CD4-positive, alpha-beta T cell (primary cell): ENCODE measurements at regions of chr14 and their contacts with region 1.

Region 1: GRCh38 chr14:53152890-53153701 is at the start of gene DDHD1:
- DNase-seq: peak; percentile 69 to 96 (median 82)
- ATAC-seq: peak; percentile 82
- H3K4me3 ChIP-seq: peak within 1 kb of the TSS; percentile 98
- H3K4me3 Mint-ChIP-seq: peak within 1 kb of the TSS; percentile 99
- H3K27ac ChIP-seq: peak within 1 kb of the TSS; percentile 87 to 94
- H3K27ac Mint-ChIP-seq: peak within 1 kb of the TSS; percentile 97
- H3K4me1 ChIP-seq: peaks cover 26% of the 10 kb centered on the region
- H3K4me1 Mint-ChIP-seq: peaks cover 56% of the 10 kb centered on the region
- H3K27me3 ChIP-seq: no peaks in the 10 kb centered on the region
- H3K27me3 Mint-ChIP-seq: no peaks in the 10 kb centered on the region
- CTCF ChIP-seq: no peak
- total RNA-seq, gene DDHD1: 42.5 to 44.5 TPM

Region 2: DNA sequence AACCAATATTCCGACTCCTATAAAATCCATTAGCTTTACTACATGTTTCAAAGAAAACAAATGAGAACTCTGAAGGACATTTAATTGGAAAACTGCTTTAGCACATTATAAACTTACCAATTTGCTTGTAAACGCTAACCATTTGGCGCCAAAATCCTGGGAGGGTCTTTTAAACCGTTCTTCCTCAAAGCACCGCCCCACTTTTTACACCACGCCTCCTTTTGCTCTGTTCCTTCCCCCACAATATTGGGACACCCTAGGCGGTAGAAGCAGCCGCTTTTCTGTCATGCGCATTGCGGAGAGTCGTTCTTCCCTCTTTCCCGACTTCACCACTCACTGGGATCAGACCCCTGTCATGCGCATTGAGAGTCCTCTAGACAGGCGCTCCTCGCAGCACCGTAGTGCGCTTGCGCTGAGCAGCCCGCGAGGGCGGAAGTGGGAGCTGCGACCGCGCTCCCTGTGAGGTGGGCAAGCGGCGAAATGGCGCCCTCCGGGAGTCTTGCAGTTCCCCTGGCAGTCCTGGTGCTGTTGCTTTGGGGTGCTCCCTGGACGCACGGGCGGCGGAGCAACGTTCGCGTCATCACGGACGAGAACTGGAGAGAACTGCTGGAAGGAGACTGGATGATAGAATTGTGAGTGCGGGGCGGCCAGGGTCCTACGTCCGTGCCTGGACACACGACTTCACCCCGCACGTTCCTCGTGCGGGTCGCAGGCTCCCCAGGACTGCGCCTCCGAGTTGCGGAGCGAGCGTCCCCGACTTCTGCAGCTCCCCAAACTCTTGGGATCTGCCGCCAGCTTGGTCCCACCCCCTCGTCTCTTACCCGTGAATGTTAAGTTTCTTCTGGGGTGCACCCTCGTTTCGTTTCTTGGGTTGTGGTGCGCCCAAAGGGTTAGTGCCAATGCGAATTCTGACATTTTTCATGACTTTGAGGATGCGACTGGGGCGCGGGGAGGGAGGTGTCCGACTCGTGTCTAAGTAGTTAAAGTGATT is 1913.0 kb before region 1 on chr14 and contains the start of gene TMX1:
- CTCF ChIA-PET with region 1: no interaction called
- POLR2A ChIA-PET with region 1: interaction called, 3 read pairs
- intact Hi-C with region 1: loop called in 1 of 2 experiments (anchors 10 kb)
- DNase-seq: peak; percentile 63 to 95 (median 80)
- ATAC-seq: peak; percentile 90
- H3K4me3 ChIP-seq: peak within 1 kb of the TSS; percentile 86
- H3K4me3 Mint-ChIP-seq: no peak within 1 kb of the TSS
- H3K27ac ChIP-seq: peak within 1 kb of the TSS; percentile 69 to 75
- H3K27ac Mint-ChIP-seq: no peak within 1 kb of the TSS
- H3K4me1 ChIP-seq: peaks cover 19% of the 10 kb centered on the region
- H3K4me1 Mint-ChIP-seq: peaks cover 42% of the 10 kb centered on the region
- H3K27me3 ChIP-seq: no peaks in the 10 kb centered on the region
- H3K27me3 Mint-ChIP-seq: no peaks in the 10 kb centered on the region
- CTCF ChIP-seq: no peak
- total RNA-seq, gene TMX1: 9.5 to 11.0 TPM

Region 3: GRCh38 chr14:52741865-52742264 is 411.2 kb before region 1 on chr14:
- CTCF ChIA-PET with region 1: no interaction called
- POLR2A ChIA-PET with region 1: interaction called, 12 read pairs
- intact Hi-C with region 1: no loop called
- DNase-seq: peak in 4 of 14 experiments; percentile 21 to 65 (median 46)
- ATAC-seq: peak; percentile 63
- H3K4me3 ChIP-seq: peak overlapping the region; percentile 41
- H3K4me3 Mint-ChIP-seq: peak overlapping the region; percentile 76
- H3K27ac ChIP-seq: peak overlapping the region; percentile 77 to 81
- H3K27ac Mint-ChIP-seq: peak overlapping the region; percentile 98
- H3K4me1 ChIP-seq: peaks cover 39% of the 10 kb centered on the region
- H3K4me1 Mint-ChIP-seq: peaks cover 83% of the 10 kb centered on the region
- H3K27me3 ChIP-seq: no peaks in the 10 kb centered on the region
- H3K27me3 Mint-ChIP-seq: no peaks in the 10 kb centered on the region
- CTCF ChIP-seq: no peak

Region 4: DNA sequence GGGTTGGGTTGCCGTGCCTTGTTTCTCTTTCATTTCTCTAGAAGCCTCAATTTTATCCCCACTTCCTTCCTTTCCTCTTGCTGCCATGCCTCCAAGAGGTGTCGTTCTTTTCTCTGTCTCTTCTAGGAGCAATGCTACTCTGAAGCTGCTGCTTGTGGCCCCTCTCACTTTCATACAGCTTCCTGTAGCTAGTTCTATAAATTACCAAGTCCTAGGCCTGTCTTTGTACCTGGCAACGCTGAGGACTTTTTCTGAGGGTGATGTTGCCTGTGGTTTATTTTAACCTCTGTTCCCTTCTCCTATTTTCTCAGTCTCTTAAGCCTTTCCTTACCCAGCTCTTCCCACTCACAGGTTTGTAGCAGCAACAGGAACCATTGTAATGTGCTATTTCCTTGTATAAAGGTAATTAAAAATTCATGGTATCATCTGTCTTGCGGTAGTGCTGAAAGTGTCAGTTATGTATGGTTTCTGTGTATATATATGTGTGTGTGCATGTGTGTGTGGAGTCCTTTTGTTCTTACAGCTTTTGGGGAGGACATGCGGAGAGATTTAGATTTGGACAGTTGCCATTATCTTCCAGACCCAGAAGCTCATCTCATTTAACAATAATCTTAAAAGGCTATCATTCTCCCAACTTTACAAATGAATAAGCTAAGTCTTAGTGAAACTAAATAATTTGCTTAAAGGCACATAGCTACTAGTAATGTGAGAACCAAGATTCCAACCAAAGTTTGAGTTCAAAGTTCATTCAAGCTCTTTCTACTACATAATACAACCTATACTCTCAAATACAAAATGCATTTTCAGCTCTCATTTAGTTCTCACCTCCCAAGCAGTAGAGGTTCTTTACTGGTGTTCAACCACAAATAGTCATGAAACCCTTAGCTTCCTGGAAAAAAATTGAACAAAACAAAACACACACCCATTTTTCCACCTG is 43.7 kb before region 1 on chr14:
- CTCF ChIA-PET with region 1: interaction called, 9 read pairs
- POLR2A ChIA-PET with region 1: interaction called, 179 read pairs
- intact Hi-C with region 1: loop called (anchors 2 kb)
- DNase-seq: peak; percentile 16 to 83 (median 34)
- ATAC-seq: peak; percentile 30
- H3K4me3 ChIP-seq: peak overlapping the region; percentile 61
- H3K4me3 Mint-ChIP-seq: no peak overlapping the region
- H3K27ac ChIP-seq: peak overlapping the region; percentile 63 to 65
- H3K27ac Mint-ChIP-seq: no peak overlapping the region
- H3K4me1 ChIP-seq: peaks cover 15% of the 10 kb centered on the region
- H3K4me1 Mint-ChIP-seq: peaks cover 8% of the 10 kb centered on the region
- H3K27me3 ChIP-seq: no peaks in the 10 kb centered on the region
- H3K27me3 Mint-ChIP-seq: no peaks in the 10 kb centered on the region
- CTCF ChIP-seq: no peak

Region 5: GRCh38 chr14:53166958-53167357 is 13.9 kb after region 1 on chr14:
- CTCF ChIA-PET with region 1: interaction called, 4 read pairs
- POLR2A ChIA-PET with region 1: interaction called, 20 read pairs
- intact Hi-C with region 1: no loop called
- DNase-seq: no peak
- ATAC-seq: no peak
- H3K4me3 ChIP-seq: no peak overlapping the region
- H3K4me3 Mint-ChIP-seq: no peak overlapping the region
- H3K27ac ChIP-seq: no peak overlapping the region
- H3K27ac Mint-ChIP-seq: no peak overlapping the region
- H3K4me1 ChIP-seq: no peaks in the 10 kb centered on the region
- H3K4me1 Mint-ChIP-seq: peaks cover 2% of the 10 kb centered on the region
- H3K27me3 ChIP-seq: no peaks in the 10 kb centered on the region
- H3K27me3 Mint-ChIP-seq: no peaks in the 10 kb centered on the region
- CTCF ChIP-seq: no peak

Region 6: DNA sequence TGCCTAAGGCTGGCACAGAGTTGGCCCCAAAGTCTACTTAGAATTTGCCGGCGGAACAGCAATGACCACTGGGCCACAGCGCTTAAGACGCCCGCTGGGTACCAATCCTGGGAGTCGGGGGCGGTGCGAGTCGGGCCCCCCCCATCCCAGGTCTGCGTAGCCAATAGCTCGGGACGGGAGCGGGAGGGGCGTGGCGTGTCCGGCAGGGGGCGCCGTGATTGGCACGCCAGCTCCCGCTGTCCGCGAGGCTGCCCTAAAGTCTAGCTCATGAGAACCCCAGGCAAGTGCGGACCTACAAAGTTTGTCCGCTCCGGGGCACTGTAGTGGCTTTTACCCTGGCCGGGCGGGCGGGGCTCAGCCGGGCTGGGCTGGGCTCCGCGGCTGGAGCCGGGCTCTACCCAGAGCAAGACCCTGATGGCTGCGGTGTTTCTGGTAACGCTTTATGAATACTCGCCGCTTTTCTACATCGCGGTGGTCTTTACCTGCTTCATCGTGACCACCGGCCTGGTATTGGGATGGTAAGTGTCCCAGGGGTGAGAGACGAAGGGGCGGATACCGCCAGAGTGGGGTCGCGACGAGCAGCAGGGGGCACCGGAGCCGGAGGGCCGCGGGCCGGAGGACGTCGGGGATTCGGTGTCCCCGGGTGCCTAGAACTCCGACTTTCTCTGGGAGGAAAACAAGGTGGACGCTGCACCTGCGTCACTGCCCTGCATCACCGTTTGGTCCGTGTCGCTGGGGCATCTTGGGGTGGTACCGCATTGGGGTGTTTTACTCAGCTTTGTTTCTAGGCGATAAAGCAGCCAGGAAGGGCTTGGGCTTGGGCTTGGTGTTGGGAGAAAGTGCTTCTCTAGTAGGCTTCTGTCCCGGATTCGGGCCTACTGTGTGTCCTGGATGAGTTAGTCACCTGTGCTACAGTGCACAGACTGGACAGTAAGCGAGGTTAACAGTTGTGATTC is 1356.7 kb after region 1 on chr14 and contains the start of gene CGRRF1:
- CTCF ChIA-PET with region 1: no interaction called
- POLR2A ChIA-PET with region 1: no interaction called
- intact Hi-C with region 1: loop called in 1 of 2 experiments (anchors 10 kb)
- DNase-seq: peak; percentile 87 to 97 (median 94)
- ATAC-seq: peak; percentile 95
- H3K4me3 ChIP-seq: peak within 1 kb of the TSS; percentile 79
- H3K4me3 Mint-ChIP-seq: peak within 1 kb of the TSS; percentile 96
- H3K27ac ChIP-seq: peak within 1 kb of the TSS; percentile 6 to 59
- H3K27ac Mint-ChIP-seq: peak within 1 kb of the TSS; percentile 78
- H3K4me1 ChIP-seq: peaks cover 31% of the 10 kb centered on the region
- H3K4me1 Mint-ChIP-seq: peaks cover 59% of the 10 kb centered on the region
- H3K27me3 ChIP-seq: no peaks in the 10 kb centered on the region
- H3K27me3 Mint-ChIP-seq: peaks cover 4% of the 10 kb centered on the region
- CTCF ChIP-seq: peak; percentile 64
- total RNA-seq, gene CGRRF1: 34.5 to 42.8 TPM